ENCODE measurements at regions of chr10 and their contacts with region 1.

Region 1: GRCh38 chr10:98045785-98046389 is 15.5 kb upstream of the CRTAC1 start:
- DNase-seq: peak; percentile 79
- H3K4me3 Mint-ChIP-seq: no peak overlapping the region
- H3K27ac Mint-ChIP-seq: no peak overlapping the region
- H3K4me1 Mint-ChIP-seq: peaks cover 5% of the 10 kb centered on the region
- H3K27me3 Mint-ChIP-seq: peaks cover 56% of the 10 kb centered on the region
- CTCF ChIP-seq: peak; percentile 77

Region 2: DNA sequence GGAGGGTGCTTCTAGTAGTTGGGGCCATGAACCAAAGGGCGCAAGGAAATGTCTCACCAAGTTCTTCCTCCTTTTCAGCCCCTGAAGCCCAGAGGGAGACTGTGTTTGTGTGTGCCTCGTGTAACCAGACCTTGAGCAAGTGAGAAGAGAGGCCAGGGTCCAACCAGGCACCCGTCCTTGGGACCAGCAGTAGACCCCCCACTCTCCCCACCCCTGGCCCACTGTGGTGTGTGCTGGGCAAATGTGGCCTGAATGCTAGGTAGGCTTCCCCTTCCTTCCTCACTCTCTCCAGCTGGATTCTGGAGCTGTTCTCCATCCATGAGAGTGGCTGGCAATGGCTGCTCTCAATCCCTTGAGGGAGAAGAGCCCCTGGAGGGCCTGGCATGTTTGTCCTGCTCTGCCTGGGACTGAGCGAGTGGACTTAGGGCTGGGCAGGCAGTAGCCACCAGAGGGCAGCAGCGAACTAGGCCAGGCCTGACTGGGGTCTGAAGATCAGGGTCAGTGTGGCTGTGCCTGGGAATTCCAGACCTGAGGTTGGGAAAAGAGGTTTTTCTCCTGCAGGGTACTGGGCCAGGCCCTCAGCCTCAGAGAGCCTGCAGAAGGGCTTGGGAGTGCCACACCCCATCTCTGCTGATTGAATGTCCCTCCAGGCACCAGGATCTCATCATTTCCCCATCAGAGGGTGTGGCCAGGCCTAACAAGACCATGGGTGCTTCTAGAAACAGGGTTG is 286.6 kb before region 1 on chr10:
- CTCF ChIA-PET with region 1: interaction called, 6 read pairs
- POLR2A ChIA-PET with region 1: no interaction called
- intact Hi-C with region 1: loop called (anchors 1 kb)
- DNase-seq: peak; percentile 67
- H3K4me3 Mint-ChIP-seq: no peak overlapping the region
- H3K27ac Mint-ChIP-seq: no peak overlapping the region
- H3K4me1 Mint-ChIP-seq: no peaks in the 10 kb centered on the region
- H3K27me3 Mint-ChIP-seq: no peaks in the 10 kb centered on the region
- CTCF ChIP-seq: peak; percentile 77

Region 3: GRCh38 chr10:97914837-97915211 is 131.1 kb before region 1 on chr10:
- CTCF ChIA-PET with region 1: interaction called, 347 read pairs
- POLR2A ChIA-PET with region 1: interaction called, 9 read pairs
- intact Hi-C with region 1: loop called (anchors 1 kb)
- DNase-seq: peak; percentile 71
- H3K4me3 Mint-ChIP-seq: no peak overlapping the region
- H3K27ac Mint-ChIP-seq: no peak overlapping the region
- H3K4me1 Mint-ChIP-seq: no peaks in the 10 kb centered on the region
- H3K27me3 Mint-ChIP-seq: peaks cover 51% of the 10 kb centered on the region
- CTCF ChIP-seq: peak; percentile 94

Region 4: GRCh38 chr10:97949462-97949861 is 96.4 kb before region 1 on chr10:
- CTCF ChIA-PET with region 1: interaction called, 10 read pairs
- POLR2A ChIA-PET with region 1: no interaction called
- intact Hi-C with region 1: no loop called
- DNase-seq: no peak
- H3K4me3 Mint-ChIP-seq: no peak overlapping the region
- H3K27ac Mint-ChIP-seq: no peak overlapping the region
- H3K4me1 Mint-ChIP-seq: no peaks in the 10 kb centered on the region
- H3K27me3 Mint-ChIP-seq: peaks cover 56% of the 10 kb centered on the region
- CTCF ChIP-seq: no peak

Region 5: GRCh38 chr10:98055875-98056516 is 10.1 kb after region 1 on chr10:
- CTCF ChIA-PET with region 1: interaction called, 42 read pairs
- POLR2A ChIA-PET with region 1: no interaction called
- intact Hi-C with region 1: no loop called
- DNase-seq: peak; percentile 58
- H3K4me3 Mint-ChIP-seq: no peak overlapping the region
- H3K27ac Mint-ChIP-seq: no peak overlapping the region
- H3K4me1 Mint-ChIP-seq: no peaks in the 10 kb centered on the region
- H3K27me3 Mint-ChIP-seq: peaks cover 10% of the 10 kb centered on the region
- CTCF ChIP-seq: no peak

Region 6: GRCh38 chr10:98062424-98062823 is 16.5 kb after region 1 on chr10:
- CTCF ChIA-PET with region 1: interaction called, 10 read pairs
- POLR2A ChIA-PET with region 1: no interaction called
- intact Hi-C with region 1: no loop called
- DNase-seq: no peak
- H3K4me3 Mint-ChIP-seq: no peak overlapping the region
- H3K27ac Mint-ChIP-seq: no peak overlapping the region
- H3K4me1 Mint-ChIP-seq: no peaks in the 10 kb centered on the region
- H3K27me3 Mint-ChIP-seq: peaks cover 22% of the 10 kb centered on the region
- CTCF ChIP-seq: no peak

Measured in MCF 10A (cell line).